ENCODE measurements at regions of chr14 and their contacts with region 1.

Region 1: DNA sequence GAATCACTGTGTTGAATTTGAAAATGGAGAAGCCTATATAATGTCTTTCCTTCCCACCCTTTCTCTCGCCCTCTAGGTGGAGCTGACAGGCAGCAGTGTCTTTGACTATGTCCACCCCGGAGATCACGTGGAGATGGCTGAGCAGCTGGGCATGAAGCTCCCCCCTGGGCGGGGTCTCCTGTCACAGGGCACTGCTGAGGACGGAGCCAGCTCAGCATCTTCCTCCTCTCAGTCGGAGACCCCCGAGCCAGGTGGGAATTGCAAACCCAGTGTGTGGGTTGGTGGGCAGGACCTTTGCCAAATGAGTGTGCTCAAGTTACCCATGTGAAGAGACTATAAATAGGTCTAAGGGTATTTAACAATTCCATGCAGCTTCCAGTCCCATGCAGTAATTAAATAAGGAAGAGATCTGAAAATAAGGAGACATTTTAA is 274.7 kb downstream of the EGLN3 start:
- DNase-seq: no peak
- ATAC-seq: peak; percentile 94
- H3K4me3 ChIP-seq: no peak overlapping the region
- H3K27ac ChIP-seq: no peak overlapping the region
- H3K4me1 ChIP-seq: no peaks in the 10 kb centered on the region
- H3K27me3 ChIP-seq: no peaks in the 10 kb centered on the region
- CTCF ChIP-seq: peak; percentile 14 to 51 (median 31); a peak in 4 of 6 replicates
- EP300 ChIP-seq: no peak
- POLR2A ChIP-seq: no peak
- RAD21 ChIP-seq: 0 out of 2 replicates have a peak, but pooled peaks have one; percentile 15

Region 2: GRCh38 chr14:33332138-33332896 is 343.8 kb before region 1 on chr14:
- CTCF ChIA-PET with region 1: no interaction called
- POLR2A ChIA-PET with region 1: no interaction called
- RAD21 ChIA-PET with region 1: no interaction called
- SMC1A ChIA-PET with region 1: no interaction called
- in situ Hi-C with region 1: no loop called
- intact Hi-C with region 1: no loop called
- DNase-seq: no peak
- ATAC-seq: no peak
- H3K4me3 ChIP-seq: no peak overlapping the region
- H3K27ac ChIP-seq: no peak overlapping the region
- H3K4me1 ChIP-seq: no peaks in the 10 kb centered on the region
- H3K27me3 ChIP-seq: no peaks in the 10 kb centered on the region
- CTCF ChIP-seq: no peak
- EP300 ChIP-seq: no peak
- POLR2A ChIP-seq: no peak
- RAD21 ChIP-seq: no peak

Region 3: DNA sequence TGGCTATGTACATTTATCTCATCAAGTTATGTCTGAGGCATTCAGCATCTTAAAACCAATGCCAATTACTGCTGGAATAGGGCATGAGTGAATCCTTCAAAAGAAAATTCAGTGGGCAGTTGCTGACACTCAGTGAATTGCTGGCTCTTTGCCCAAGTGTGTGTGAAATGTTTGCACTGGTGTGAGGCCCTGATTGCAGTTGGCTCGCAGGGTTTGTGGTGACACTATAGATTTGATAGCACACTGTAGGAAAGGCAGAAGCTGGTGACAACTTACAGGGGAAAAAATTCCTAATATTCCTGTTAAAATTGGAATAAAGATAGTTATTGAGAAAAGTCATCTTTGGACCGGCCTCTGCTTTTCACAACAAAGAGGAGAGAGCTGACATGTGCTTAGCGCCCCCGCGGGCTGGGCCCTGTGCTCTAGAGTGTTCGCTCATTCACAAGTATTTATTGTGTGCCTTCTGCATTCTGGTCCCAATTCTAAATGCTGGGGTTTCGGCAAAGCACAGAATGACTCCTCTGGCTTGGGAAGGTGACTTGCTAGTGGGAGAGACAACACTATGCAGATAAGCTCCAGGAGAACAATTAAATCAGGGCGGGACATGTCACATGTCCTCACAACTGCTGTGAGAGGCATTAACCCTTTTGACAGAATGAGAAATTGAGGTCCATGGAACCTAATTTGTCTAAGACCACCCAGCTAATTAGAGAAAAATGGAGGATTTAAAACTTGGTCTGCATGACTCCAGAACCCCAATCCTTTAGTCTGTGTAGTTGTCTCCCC is 318.7 kb before region 1 on chr14:
- CTCF ChIA-PET with region 1: no interaction called
- POLR2A ChIA-PET with region 1: no interaction called
- RAD21 ChIA-PET with region 1: no interaction called
- SMC1A ChIA-PET with region 1: no interaction called
- in situ Hi-C with region 1: no loop called
- intact Hi-C with region 1: no loop called
- DNase-seq: no peak
- ATAC-seq: no peak
- H3K4me3 ChIP-seq: no peak overlapping the region
- H3K27ac ChIP-seq: no peak overlapping the region
- H3K4me1 ChIP-seq: no peaks in the 10 kb centered on the region
- H3K27me3 ChIP-seq: no peaks in the 10 kb centered on the region; a peak in 2 of 4 replicates
- CTCF ChIP-seq: no peak
- EP300 ChIP-seq: no peak
- POLR2A ChIP-seq: no peak
- RAD21 ChIP-seq: no peak

Region 4: GRCh38 chr14:33490555-33490954 is 185.6 kb before region 1 on chr14:
- CTCF ChIA-PET with region 1: no interaction called
- POLR2A ChIA-PET with region 1: no interaction called
- RAD21 ChIA-PET with region 1: interaction called, 4 read pairs
- SMC1A ChIA-PET with region 1: interaction called, 11 read pairs
- in situ Hi-C with region 1: no loop called
- intact Hi-C with region 1: no loop called
- DNase-seq: no peak
- ATAC-seq: no peak
- H3K4me3 ChIP-seq: no peak overlapping the region
- H3K27ac ChIP-seq: no peak overlapping the region
- H3K4me1 ChIP-seq: no peaks in the 10 kb centered on the region
- H3K27me3 ChIP-seq: no peaks in the 10 kb centered on the region; a peak in 1 of 4 replicates
- CTCF ChIP-seq: no peak
- EP300 ChIP-seq: no peak
- POLR2A ChIP-seq: no peak
- RAD21 ChIP-seq: no peak

Region 5: DNA sequence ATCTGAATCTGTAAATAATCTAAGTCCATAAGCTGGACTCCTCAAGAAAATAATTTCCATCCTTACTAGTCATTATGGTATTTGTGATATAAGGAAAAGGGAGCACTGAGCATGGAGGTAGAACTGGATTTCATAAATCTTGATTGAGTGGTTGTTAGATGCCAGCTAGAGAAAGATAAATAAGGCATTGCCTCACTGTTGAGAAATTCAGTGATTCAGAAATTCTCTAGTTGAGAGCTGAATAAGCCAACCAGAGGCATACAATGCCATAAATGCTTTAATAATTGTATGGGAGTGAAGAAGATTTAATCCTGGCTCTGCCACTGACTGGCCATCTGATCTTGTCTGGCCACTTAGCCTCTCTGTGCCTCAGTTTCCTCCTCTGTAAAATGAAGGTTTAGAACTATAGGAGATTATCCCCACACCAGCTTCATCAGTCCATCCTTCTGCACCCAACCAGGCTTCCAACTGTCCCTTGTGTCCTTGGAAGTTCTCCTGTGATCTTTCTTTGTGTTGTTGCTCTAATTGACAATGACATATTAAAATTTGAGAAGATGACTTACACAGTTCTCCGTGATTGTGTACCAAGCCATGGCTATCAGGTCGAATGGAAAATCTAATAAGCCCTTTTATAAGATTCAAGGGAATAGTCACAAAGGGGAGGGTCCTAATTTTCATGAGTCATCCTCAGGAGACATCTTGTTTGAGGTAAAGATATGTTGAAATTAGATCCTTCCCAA is 119.6 kb before region 1 on chr14:
- CTCF ChIA-PET with region 1: interaction called, 4 read pairs
- POLR2A ChIA-PET with region 1: interaction called, 3 read pairs
- RAD21 ChIA-PET with region 1: interaction called, 6 read pairs
- SMC1A ChIA-PET with region 1: interaction called, 10 read pairs
- in situ Hi-C with region 1: no loop called
- intact Hi-C with region 1: no loop called
- DNase-seq: no peak
- ATAC-seq: no peak
- H3K4me3 ChIP-seq: no peak overlapping the region
- H3K27ac ChIP-seq: no peak overlapping the region
- H3K4me1 ChIP-seq: no peaks in the 10 kb centered on the region
- H3K27me3 ChIP-seq: peaks cover 0 to 3% of the 10 kb centered on the region in 2 experiments; a peak in 1 of 4 replicates
- CTCF ChIP-seq: no peak
- EP300 ChIP-seq: no peak
- POLR2A ChIP-seq: no peak
- RAD21 ChIP-seq: no peak

Region 6: DNA sequence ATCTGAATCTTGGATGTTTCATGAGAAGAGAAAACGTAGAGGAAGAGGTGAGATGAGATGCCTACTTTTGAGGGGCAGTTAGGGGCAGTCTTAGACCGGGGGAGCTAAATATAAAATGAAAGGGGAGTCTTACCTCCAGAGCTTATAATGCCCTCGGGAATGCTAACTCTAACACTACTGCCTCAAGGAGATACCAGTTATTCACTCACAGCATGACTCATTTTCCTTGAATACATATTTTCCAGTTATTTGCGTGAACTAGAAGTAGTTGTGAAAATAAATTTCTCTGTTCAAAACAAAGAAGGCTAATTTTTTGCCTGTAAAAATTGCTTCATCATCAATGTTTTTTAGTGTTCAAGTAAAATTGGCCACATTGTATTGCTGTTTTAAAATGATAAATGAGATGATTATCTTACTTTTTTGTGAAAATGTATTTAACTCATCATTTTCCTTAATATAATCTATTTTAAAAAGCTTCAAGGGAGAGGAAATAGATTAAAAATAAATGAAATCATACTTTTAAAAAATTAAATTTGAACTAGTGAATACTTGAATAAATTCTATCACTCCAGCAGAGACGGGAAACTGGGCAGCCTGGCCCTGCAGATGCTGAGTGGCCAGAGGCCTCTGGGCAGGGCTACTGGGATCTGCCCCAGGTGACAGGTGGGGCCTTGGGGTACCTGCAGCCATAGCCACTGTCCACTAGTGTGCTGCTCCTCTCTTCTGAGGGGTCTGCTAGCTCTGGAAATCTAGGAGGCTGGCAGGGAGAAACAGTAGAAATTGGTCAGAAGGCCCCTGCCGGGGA is 64.5 kb before region 1 on chr14:
- CTCF ChIA-PET with region 1: interaction called, 20 read pairs
- POLR2A ChIA-PET with region 1: interaction called, 5 read pairs
- RAD21 ChIA-PET with region 1: interaction called, 8 read pairs
- SMC1A ChIA-PET with region 1: interaction called, 11 read pairs
- in situ Hi-C with region 1: no loop called
- intact Hi-C with region 1: no loop called
- DNase-seq: no peak
- ATAC-seq: peak; percentile 29; the same call in 1 of the 3 replicates
- H3K4me3 ChIP-seq: no peak overlapping the region
- H3K27ac ChIP-seq: no peak overlapping the region
- H3K4me1 ChIP-seq: no peaks in the 10 kb centered on the region
- H3K27me3 ChIP-seq: no peaks in the 10 kb centered on the region
- CTCF ChIP-seq: no peak
- EP300 ChIP-seq: no peak
- POLR2A ChIP-seq: no peak
- RAD21 ChIP-seq: no peak

Region 7: GRCh38 chr14:33692762-33693161 is 16.6 kb after region 1 on chr14:
- CTCF ChIA-PET with region 1: interaction called, 25 read pairs
- POLR2A ChIA-PET with region 1: interaction called, 4 read pairs
- RAD21 ChIA-PET with region 1: interaction called, 10 read pairs
- SMC1A ChIA-PET with region 1: interaction called, 24 read pairs
- in situ Hi-C with region 1: no loop called
- intact Hi-C with region 1: no loop called
- DNase-seq: no peak
- ATAC-seq: no peak
- H3K4me3 ChIP-seq: no peak overlapping the region
- H3K27ac ChIP-seq: no peak overlapping the region
- H3K4me1 ChIP-seq: no peaks in the 10 kb centered on the region
- H3K27me3 ChIP-seq: no peaks in the 10 kb centered on the region
- CTCF ChIP-seq: no peak
- EP300 ChIP-seq: no peak
- POLR2A ChIP-seq: no peak
- RAD21 ChIP-seq: no peak

Region 8: GRCh38 chr14:33755358-33755757 is 79.2 kb after region 1 on chr14:
- CTCF ChIA-PET with region 1: interaction called, 39 read pairs
- POLR2A ChIA-PET with region 1: no interaction called
- RAD21 ChIA-PET with region 1: interaction called, 5 read pairs
- SMC1A ChIA-PET with region 1: interaction called, 11 read pairs
- in situ Hi-C with region 1: no loop called
- intact Hi-C with region 1: no loop called
- DNase-seq: no peak
- ATAC-seq: no peak
- H3K4me3 ChIP-seq: no peak overlapping the region
- H3K27ac ChIP-seq: no peak overlapping the region
- H3K4me1 ChIP-seq: no peaks in the 10 kb centered on the region
- H3K27me3 ChIP-seq: no peaks in the 10 kb centered on the region
- CTCF ChIP-seq: no peak
- EP300 ChIP-seq: no peak
- POLR2A ChIP-seq: no peak
- RAD21 ChIP-seq: no peak

Region 9: GRCh38 chr14:33792720-33793368 is 116.7 kb after region 1 on chr14:
- CTCF ChIA-PET with region 1: interaction called, 334 read pairs
- POLR2A ChIA-PET with region 1: interaction called, 22 read pairs
- RAD21 ChIA-PET with region 1: interaction called, 264 read pairs
- SMC1A ChIA-PET with region 1: interaction called, 158 read pairs
- in situ Hi-C with region 1: no loop called
- intact Hi-C with region 1: loop called (anchors 1 kb)
- DNase-seq: peak; percentile 15
- ATAC-seq: peak; percentile 91
- H3K4me3 ChIP-seq: no peak overlapping the region
- H3K27ac ChIP-seq: no peak overlapping the region
- H3K4me1 ChIP-seq: no peaks in the 10 kb centered on the region
- H3K27me3 ChIP-seq: no peaks in the 10 kb centered on the region
- CTCF ChIP-seq: peak; percentile 91 to 95 (median 93); a peak in 5 of 6 replicates
- EP300 ChIP-seq: no peak
- POLR2A ChIP-seq: no peak
- RAD21 ChIP-seq: peak; percentile 86

Region 10: DNA sequence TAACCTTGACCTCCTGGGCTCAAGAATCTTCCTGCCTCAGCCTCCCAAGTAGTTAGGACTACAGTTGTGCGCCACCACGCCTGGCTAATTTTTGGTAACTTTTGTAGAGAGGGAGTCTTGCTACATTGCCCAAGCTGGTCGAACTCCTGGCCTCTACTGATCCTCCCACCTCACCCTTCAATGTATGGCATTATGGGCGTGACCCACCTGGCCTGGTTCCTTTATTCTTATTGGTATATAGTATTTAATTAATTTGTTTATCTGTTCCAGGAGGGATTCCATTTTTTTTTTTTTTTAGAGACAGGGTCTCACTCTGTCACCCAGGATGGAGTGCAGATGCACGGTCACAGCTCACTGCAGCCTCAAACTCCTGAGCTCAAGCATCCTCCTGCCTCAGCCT is 904.2 kb after region 1 on chr14:
- CTCF ChIA-PET with region 1: no interaction called
- POLR2A ChIA-PET with region 1: no interaction called
- RAD21 ChIA-PET with region 1: no interaction called
- SMC1A ChIA-PET with region 1: no interaction called
- in situ Hi-C with region 1: no loop called
- intact Hi-C with region 1: no loop called
- DNase-seq: no peak
- ATAC-seq: no peak
- H3K4me3 ChIP-seq: no peak overlapping the region
- H3K27ac ChIP-seq: no peak overlapping the region
- H3K4me1 ChIP-seq: no peaks in the 10 kb centered on the region
- H3K27me3 ChIP-seq: no peaks in the 10 kb centered on the region
- CTCF ChIP-seq: no peak
- EP300 ChIP-seq: no peak
- POLR2A ChIP-seq: no peak
- RAD21 ChIP-seq: no peak

Measured in GM12878 (cell line).